ENCODE measurements at regions of chr1 and their contacts with region 1.

Region 1: GRCh38 chr1:91803847-91804545 is 82.0 kb downstream of the TGFBR3 start:
- DNase-seq: peak; percentile 86
- H3K4me3 Mint-ChIP-seq: peak overlapping the region; percentile 68
- H3K27ac Mint-ChIP-seq: peak overlapping the region; percentile 92
- H3K4me1 Mint-ChIP-seq: peaks cover 40% of the 10 kb centered on the region
- H3K27me3 Mint-ChIP-seq: peaks cover 3% of the 10 kb centered on the region

Region 2: DNA sequence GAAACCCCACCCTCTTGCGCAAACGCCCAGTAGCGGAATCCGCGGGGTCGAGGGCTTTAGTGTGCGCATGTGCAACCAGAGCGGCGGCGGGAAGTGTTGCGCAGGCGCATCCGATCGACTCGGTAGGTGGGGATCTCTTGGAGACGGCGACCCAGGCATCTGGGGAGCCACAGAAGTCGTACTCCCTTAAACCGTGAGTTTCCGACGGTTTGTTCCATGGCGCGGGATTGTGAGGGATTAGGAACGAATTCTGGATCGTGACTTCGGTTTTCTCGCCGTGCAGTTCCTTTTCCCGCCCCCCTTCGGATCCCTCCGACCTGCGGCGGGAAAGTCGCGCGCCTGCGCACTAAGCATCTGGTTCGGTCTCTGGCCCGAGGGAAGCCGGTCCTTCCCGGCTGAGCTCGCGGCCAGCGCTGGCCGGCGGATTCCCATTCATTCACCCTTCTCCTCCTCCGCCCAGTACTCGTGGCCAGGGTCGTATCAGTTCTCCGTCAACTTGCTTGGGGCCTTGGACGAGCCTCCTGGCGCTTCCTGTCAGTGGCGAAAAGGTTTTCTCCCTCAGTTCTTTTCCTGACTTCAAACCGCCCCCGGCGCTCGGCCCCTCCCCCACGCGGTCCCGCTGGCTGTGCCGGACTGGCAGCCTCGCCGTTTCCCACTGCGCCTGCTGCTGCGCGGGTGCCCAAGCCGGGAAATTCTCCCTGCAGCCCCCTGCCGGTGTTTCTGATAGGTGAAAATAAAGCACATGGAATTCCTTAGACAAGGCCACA is 303.1 kb before region 1 on chr1 and contains the start of gene CDC7:
- CTCF ChIA-PET with region 1: no interaction called
- POLR2A ChIA-PET with region 1: no interaction called
- intact Hi-C with region 1: loop called (anchors 1 kb)
- DNase-seq: peak; percentile 88
- H3K4me3 Mint-ChIP-seq: no peak within 1 kb of the TSS
- H3K27ac Mint-ChIP-seq: no peak within 1 kb of the TSS
- H3K4me1 Mint-ChIP-seq: peaks cover 16% of the 10 kb centered on the region
- H3K27me3 Mint-ChIP-seq: no peaks in the 10 kb centered on the region
- total RNA-seq, gene CDC7: 20.2 to 20.4 TPM

Region 3: GRCh38 chr1:91684481-91685196 is 119.4 kb before region 1 on chr1:
- CTCF ChIA-PET with region 1: no interaction called
- POLR2A ChIA-PET with region 1: no interaction called
- intact Hi-C with region 1: no loop called
- DNase-seq: peak; percentile 40
- H3K4me3 Mint-ChIP-seq: no peak overlapping the region
- H3K27ac Mint-ChIP-seq: peak overlapping the region; percentile 50
- H3K4me1 Mint-ChIP-seq: peaks cover 22% of the 10 kb centered on the region
- H3K27me3 Mint-ChIP-seq: no peaks in the 10 kb centered on the region

Region 4: DNA sequence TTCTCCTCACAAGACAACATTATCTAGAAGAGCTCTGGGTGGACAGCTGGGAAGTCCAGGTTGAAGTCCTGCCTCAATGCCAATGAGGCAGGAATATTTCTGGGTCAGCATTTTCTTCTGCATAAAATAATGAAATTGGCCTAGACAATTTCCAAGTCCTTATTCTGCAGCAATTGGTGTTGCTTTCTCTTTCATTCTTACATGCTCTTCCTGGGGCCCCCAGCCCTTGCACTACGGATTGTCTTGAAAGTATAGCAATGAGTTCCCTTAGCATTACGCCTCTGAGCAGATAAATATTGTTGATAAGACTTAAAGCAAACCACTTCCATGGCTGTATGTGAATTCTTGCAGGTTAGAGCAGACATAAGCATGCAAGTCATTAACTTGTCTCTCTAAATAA is 106.6 kb before region 1 on chr1:
- CTCF ChIA-PET with region 1: no interaction called
- POLR2A ChIA-PET with region 1: no interaction called
- intact Hi-C with region 1: loop called (anchors 1 kb)
- DNase-seq: peak; percentile 77
- H3K4me3 Mint-ChIP-seq: peak overlapping the region; percentile 48
- H3K27ac Mint-ChIP-seq: peak overlapping the region; percentile 54
- H3K4me1 Mint-ChIP-seq: peaks cover 31% of the 10 kb centered on the region
- H3K27me3 Mint-ChIP-seq: no peaks in the 10 kb centered on the region

Region 5: GRCh38 chr1:91754348-91754747 is 49.6 kb before region 1 on chr1:
- CTCF ChIA-PET with region 1: interaction called, 4 read pairs
- POLR2A ChIA-PET with region 1: interaction called, 9 read pairs
- intact Hi-C with region 1: loop called (anchors 1 kb)
- DNase-seq: peak; percentile 77
- H3K4me3 Mint-ChIP-seq: peak overlapping the region; percentile 2
- H3K27ac Mint-ChIP-seq: peak overlapping the region; percentile 67
- H3K4me1 Mint-ChIP-seq: peaks cover 38% of the 10 kb centered on the region
- H3K27me3 Mint-ChIP-seq: peaks cover 1% of the 10 kb centered on the region

Region 6: GRCh38 chr1:92485381-92486257 is 681.6 kb after region 1 on chr1:
- CTCF ChIA-PET with region 1: no interaction called
- POLR2A ChIA-PET with region 1: no interaction called
- intact Hi-C with region 1: loop called (anchors 10 kb)
- DNase-seq: peak; percentile 93
- H3K4me3 Mint-ChIP-seq: peak overlapping the region; percentile 90
- H3K27ac Mint-ChIP-seq: peak overlapping the region; percentile 98
- H3K4me1 Mint-ChIP-seq: peaks cover 33% of the 10 kb centered on the region
- H3K27me3 Mint-ChIP-seq: no peaks in the 10 kb centered on the region